ENCODE measurements at regions of chr3 and their contacts with region 1.

Region 1: DNA sequence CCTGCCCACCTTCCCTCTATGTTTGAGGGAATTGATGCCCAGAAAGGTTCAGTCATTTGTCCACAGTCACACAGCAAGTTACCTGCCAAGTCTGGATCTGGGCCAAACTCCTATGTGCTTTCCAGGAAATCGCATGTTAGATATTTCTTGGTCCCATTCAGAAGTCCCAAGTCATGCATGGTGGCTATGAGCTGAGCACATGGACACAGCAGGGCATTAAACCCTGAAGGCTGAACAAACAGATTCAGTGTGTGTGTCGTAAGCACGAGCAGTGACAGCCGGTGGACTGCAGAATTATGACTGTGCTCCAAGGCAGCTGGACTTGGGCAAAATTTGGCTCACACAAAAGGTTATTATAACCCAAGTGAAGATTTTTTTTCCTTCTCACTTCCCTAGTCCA is 11.4 kb upstream of the SLC6A6 start:
- DNase-seq: peak in 2 of 10 donors; percentile 39 to 44

Region 2: GRCh38 chr3:14261229-14261628 is 129.8 kb before region 1 on chr3:
- intact Hi-C with region 1: loop called (anchors 10 kb)
- DNase-seq: peak; percentile 69 to 98 (median 90)

Region 3: GRCh38 chr3:14461748-14462324 is 70.8 kb after region 1 on chr3:
- intact Hi-C with region 1: no loop called
- DNase-seq: peak in 9 of 10 donors; percentile 37 to 94 (median 66)

Measured in posterior cingulate gyrus (tissue), 11 donors.